ENCODE measurements at regions of chr5 and their contacts with region 1.

Region 1: GRCh38 chr5:135944967-135945560 is 9.7 kb downstream of the LECT2 start:
- DNase-seq: no peak
- ATAC-seq: peak; percentile 64 to 65
- H3K4me3 ChIP-seq: no peak overlapping the region
- H3K27ac ChIP-seq: no peak overlapping the region
- H3K4me1 ChIP-seq: no peaks in the 10 kb centered on the region
- H3K27me3 ChIP-seq: no peaks in the 10 kb centered on the region
- CTCF ChIP-seq: peak; percentile 76

Region 2: GRCh38 chr5:136080483-136081216 is 135.6 kb after region 1 on chr5:
- intact Hi-C with region 1: loop called (anchors 5 kb)
- DNase-seq: peak; percentile 91
- ATAC-seq: peak; percentile 93 to 96
- H3K4me3 ChIP-seq: peak overlapping the region; percentile 49
- H3K27ac ChIP-seq: peak overlapping the region; percentile 75
- H3K4me1 ChIP-seq: peaks cover 20% of the 10 kb centered on the region
- H3K27me3 ChIP-seq: no peaks in the 10 kb centered on the region
- CTCF ChIP-seq: no peak